ENCODE measurements at regions of chr5 and their contacts with region 1.

Region 1: DNA sequence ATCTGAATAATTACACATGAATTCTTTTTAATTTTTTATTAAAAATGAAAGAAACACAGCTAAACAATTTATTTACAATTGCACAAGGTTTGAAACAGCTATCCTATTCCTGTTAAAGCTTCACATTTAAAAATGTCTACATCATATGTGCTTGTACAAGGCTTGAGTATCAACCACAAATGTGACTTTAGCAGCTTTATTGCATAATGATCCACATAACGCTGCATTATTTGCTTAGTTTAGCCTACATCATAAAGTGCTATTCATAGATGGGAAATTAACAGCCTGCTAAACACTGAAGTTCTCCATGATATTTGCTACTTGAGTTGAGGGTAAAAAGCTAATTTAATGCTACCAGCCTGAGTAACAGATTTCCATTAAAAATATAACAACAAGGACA is 45.0 kb downstream of the TRIM36 start:
- DNase-seq: no peak
- ATAC-seq: no peak
- H3K4me3 ChIP-seq: no peak overlapping the region
- H3K27ac ChIP-seq: no peak overlapping the region
- H3K4me1 ChIP-seq: no peaks in the 10 kb centered on the region
- H3K27me3 ChIP-seq: no peaks in the 10 kb centered on the region
- CTCF ChIP-seq: no peak
- POLR2A ChIP-seq: no peak
- RAD21 ChIP-seq: no peak

Region 2: GRCh38 chr5:114957384-114957783 is 167.4 kb before region 1 on chr5:
- CTCF ChIA-PET with region 1: no interaction called
- POLR2A ChIA-PET with region 1: no interaction called
- dilution Hi-C with region 1: no loop called
- in situ Hi-C with region 1: no loop called
- intact Hi-C with region 1: no loop called
- DNase-seq: no peak
- ATAC-seq: no peak
- H3K4me3 ChIP-seq: no peak overlapping the region
- H3K27ac ChIP-seq: no peak overlapping the region
- H3K4me1 ChIP-seq: no peaks in the 10 kb centered on the region
- H3K27me3 ChIP-seq: no peaks in the 10 kb centered on the region
- CTCF ChIP-seq: no peak
- POLR2A ChIP-seq: no peak
- RAD21 ChIP-seq: no peak

Region 3: GRCh38 chr5:115160975-115161475 is 36.3 kb after region 1 on chr5:
- CTCF ChIA-PET with region 1: no interaction called
- POLR2A ChIA-PET with region 1: no interaction called
- dilution Hi-C with region 1: no loop called
- in situ Hi-C with region 1: no loop called
- intact Hi-C with region 1: loop called (anchors 5 kb)
- DNase-seq: no peak
- ATAC-seq: no peak
- H3K4me3 ChIP-seq: no peak overlapping the region
- H3K27ac ChIP-seq: no peak overlapping the region
- H3K4me1 ChIP-seq: no peaks in the 10 kb centered on the region
- H3K27me3 ChIP-seq: peaks cover 2% of the 10 kb centered on the region; the same call in 1 of the 2 replicates
- CTCF ChIP-seq: no peak
- POLR2A ChIP-seq: no peak
- RAD21 ChIP-seq: no peak